Activated naive CD8-positive, alpha-beta T cell treated with anti-CD3 and anti-CD28 coated beads, Interleukin-2, amount 10 ng/mL, durations not matched to agents 7 days and 5 days (primary cell): ENCODE measurements at regions of chr2 and their contacts with region 1.

Region 1: DNA sequence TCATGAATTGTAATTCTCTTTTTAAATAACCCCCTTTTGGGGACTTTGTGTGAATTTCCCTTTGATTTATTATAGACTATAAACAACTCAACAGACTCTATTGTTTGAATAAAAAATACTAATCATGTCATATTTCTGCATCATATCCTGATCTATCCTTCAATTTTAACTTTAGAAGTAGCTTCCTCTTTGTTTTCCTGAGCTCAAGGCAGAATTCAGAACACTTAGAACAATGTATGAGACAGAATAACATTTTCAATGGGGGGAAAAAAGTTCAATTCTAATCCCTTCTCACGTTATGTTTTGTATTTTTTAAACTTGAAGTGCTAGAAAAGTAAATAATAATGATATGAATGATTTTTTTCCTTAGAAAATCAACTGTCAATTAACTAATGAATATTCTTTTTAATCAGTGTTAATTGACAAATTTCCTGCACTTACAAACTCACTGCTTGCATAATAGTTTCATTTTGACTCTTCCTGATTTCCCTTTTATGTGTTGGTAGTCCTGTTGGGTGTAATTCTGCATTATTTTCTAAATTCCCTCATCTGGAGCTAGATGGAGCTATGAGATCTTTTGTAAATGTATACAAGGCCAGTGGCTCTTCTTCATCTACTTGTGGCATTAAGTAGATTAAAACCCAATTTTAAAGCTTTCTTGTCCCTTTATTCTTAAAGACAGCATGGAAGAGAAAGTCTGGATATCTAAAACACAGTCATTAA is 326.1 kb downstream of the PARD3B start:
- DNase-seq: no peak
- ATAC-seq: peak; percentile 88
- H3K4me3 Mint-ChIP-seq: peak overlapping the region; percentile 35
- H3K27ac Mint-ChIP-seq: peak overlapping the region; percentile 72
- H3K4me1 Mint-ChIP-seq: peaks cover 30% of the 10 kb centered on the region
- H3K27me3 Mint-ChIP-seq: no peaks in the 10 kb centered on the region

Region 2: DNA sequence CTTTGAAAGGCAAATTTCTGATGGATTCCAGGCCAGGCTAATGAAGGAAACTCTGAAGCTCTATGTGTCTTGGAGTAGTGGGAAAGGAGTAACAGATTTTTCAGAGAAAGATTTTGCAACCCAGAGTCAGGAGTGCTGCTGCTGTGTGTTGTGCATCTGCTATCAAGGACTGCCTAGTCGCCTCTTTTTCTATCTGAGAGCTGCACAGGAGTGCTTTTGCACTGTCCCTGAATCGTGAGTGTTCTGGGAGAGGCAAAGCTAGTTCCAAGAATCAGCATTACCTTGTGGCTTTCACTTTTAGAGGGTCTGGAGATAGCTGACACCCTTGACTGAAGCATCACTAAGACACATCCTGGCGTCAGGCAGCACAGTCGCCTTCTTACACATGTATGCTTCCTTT is 10.3 kb after region 1 on chr2:
- POLR2A ChIA-PET with region 1: interaction called, 10 read pairs
- DNase-seq: peak; percentile 42
- ATAC-seq: peak; percentile 97
- H3K4me3 Mint-ChIP-seq: peak overlapping the region; percentile 66
- H3K27ac Mint-ChIP-seq: peak overlapping the region; percentile 87
- H3K4me1 Mint-ChIP-seq: peaks cover 55% of the 10 kb centered on the region
- H3K27me3 Mint-ChIP-seq: no peaks in the 10 kb centered on the region

Region 3: DNA sequence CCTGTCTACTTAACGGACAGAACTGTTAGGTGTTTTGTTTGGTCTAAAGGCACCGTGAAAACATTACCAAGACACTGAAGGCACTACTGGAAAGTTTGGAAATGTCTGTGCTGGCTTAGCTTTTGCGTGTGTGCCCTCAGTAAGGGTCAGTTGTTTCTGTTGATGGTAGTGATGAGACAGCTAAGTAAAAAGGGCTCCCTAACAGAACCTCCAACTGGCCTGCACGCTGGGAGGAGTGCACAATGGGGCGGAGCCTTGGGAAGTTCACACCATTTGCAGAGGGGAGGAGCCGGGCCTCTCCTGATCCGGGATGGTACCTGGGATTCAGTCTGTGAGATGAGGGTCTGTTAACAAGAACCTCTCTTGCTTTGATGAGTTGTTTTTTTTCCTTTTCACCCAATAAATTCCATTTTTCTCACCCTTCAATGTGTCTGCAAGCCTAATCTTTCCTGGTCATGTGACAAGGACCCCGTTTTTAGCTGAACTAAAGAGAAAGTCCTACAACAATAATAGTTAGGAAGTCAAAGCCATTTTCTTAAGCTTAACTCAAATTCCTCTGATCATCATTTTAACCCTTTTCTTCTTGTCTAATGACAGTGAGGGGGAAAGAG is 42.6 kb after region 1 on chr2:
- POLR2A ChIA-PET with region 1: no interaction called
- DNase-seq: no peak
- ATAC-seq: no peak
- H3K4me3 Mint-ChIP-seq: no peak overlapping the region
- H3K27ac Mint-ChIP-seq: peak overlapping the region; percentile 34
- H3K4me1 Mint-ChIP-seq: peaks cover 4% of the 10 kb centered on the region
- H3K27me3 Mint-ChIP-seq: no peaks in the 10 kb centered on the region

Region 4: GRCh38 chr2:204967199-204967960 is 96.0 kb after region 1 on chr2:
- POLR2A ChIA-PET with region 1: no interaction called
- DNase-seq: peak; percentile 67
- ATAC-seq: peak; percentile 92
- H3K4me3 Mint-ChIP-seq: peak overlapping the region; percentile 58
- H3K27ac Mint-ChIP-seq: peak overlapping the region; percentile 83
- H3K4me1 Mint-ChIP-seq: peaks cover 37% of the 10 kb centered on the region
- H3K27me3 Mint-ChIP-seq: no peaks in the 10 kb centered on the region